Activated CD8-positive, alpha-beta memory T cell treated with anti-CD3 and anti-CD28 coated beads, Interleukin-2, amount 10 ng/mL, durations not matched to agents 7 days and 5 days (primary cell): ENCODE measurements at regions of chr10 and their contacts with region 1.

Region 1: GRCh38 chr10:103350501-103351260 is at the start of gene PCGF6:
- DNase-seq: peak; percentile 81
- ATAC-seq: peak; percentile 86
- H3K4me3 Mint-ChIP-seq: peak within 1 kb of the TSS; percentile 85
- H3K27ac Mint-ChIP-seq: peak within 1 kb of the TSS; percentile 87
- H3K4me1 Mint-ChIP-seq: peaks cover 9% of the 10 kb centered on the region
- H3K27me3 Mint-ChIP-seq: no peaks in the 10 kb centered on the region
- total RNA-seq, gene PCGF6: 17.0 to 17.2 TPM

Region 2: DNA sequence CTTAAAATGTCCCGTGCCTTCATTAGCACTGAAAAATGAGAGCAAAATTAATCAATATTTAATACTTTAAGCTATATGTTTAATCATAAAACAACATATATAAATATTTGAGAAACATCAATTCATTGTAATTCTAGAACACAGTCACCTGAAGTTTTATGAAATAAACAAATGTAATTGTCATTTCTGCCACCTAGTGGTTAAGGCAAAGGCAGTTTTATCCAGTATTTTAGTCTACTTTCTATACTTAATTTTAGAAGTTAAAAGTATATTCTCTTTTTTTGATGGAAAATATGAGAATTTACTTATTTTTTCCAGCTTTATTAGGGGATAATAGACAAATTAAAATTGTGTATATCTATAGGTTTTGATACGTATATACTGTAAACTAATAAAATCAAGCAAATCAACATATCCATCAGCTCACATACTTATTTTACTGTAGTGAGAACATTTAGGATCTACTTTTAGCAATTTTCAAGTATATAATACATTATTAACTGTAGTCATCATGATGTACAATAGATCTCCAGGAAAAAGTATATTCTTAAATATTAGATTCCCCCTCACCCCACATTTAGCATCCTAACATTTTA is 16.7 kb before region 1 on chr10:
- CTCF ChIA-PET with region 1: interaction called, 12 read pairs
- DNase-seq: no peak
- ATAC-seq: no peak
- H3K4me3 Mint-ChIP-seq: no peak overlapping the region
- H3K27ac Mint-ChIP-seq: no peak overlapping the region
- H3K4me1 Mint-ChIP-seq: peaks cover 2% of the 10 kb centered on the region
- H3K27me3 Mint-ChIP-seq: no peaks in the 10 kb centered on the region

Region 3: GRCh38 chr10:103382769-103383168 is 32.1 kb after region 1 on chr10:
- CTCF ChIA-PET with region 1: no interaction called
- DNase-seq: no peak
- ATAC-seq: no peak
- H3K4me3 Mint-ChIP-seq: no peak overlapping the region
- H3K27ac Mint-ChIP-seq: no peak overlapping the region
- H3K4me1 Mint-ChIP-seq: peaks cover 4% of the 10 kb centered on the region
- H3K27me3 Mint-ChIP-seq: no peaks in the 10 kb centered on the region